ENCODE measurements at regions of chr7 and their contacts with region 1.

Region 1: DNA sequence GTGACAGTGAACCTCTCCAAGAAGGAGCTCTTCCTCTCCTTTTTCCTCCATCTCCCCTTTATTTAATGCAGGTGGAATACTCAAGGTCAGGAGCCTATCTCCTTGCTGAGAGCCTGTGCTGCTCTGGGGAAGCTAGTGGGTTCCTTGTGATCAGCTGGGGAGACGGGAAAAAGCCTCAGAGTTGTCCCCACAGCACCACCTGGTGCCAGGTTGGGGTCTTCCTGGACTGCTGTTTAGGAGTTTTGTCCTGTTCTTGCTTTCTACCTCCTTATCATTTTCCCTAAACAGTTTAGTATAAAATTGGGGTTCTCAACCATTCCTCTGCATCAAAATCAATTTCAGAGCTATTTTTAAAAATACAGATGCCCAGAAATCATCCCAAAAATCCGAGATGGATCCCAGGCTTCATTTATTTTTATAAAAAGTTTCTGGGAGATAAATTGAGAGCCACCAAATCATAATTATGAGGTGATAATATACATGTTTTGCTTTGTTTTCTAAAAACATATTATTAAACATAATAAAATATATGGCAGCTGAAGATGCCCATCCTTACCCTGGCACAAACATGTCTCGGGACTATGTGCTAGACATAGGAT is 44.3 kb downstream of the MACC1 start:
- DNase-seq: peak; percentile 66 to 80
- ATAC-seq: peak; percentile 74
- H3K4me3 ChIP-seq: no peak overlapping the region
- H3K27ac ChIP-seq: no peak overlapping the region
- H3K4me1 ChIP-seq: no peaks in the 10 kb centered on the region
- H3K27me3 ChIP-seq: no peaks in the 10 kb centered on the region

Region 2: DNA sequence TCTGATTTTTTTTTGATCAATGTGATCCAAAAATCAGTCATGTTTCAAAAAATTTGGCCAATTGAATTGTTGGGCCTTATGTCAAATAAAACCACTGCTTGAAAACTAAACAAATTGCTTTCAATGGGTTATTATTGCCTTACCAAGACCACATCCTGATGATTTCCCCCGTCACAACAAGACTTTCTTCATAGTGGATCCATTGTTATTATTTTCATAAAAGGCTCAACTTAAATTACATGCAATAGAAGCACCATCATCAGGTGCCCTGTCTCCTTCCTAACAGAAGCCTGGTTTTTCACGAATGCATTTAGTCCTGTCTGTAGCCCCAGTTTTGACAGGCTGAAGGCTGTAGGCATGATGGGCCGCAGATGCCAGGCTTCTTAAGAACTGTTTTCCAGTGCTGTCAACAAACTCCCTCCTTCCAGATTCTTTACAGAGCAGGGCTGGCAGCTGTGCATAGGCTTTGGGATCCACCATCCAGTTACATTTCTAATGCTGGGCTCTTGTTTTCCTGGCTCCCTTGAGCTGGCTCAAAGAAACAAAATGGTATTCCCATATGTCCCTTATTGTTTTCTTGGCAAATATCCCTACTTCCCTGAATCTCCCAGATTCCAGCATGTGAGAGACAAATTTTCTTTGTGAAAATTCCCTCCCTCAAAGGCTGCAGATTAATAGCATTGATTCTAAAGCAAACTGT is 1357.4 kb before region 1 on chr7:
- intact Hi-C with region 1: no loop called
- DNase-seq: no peak
- ATAC-seq: no peak
- H3K4me3 ChIP-seq: no peak overlapping the region
- H3K27ac ChIP-seq: no peak overlapping the region
- H3K4me1 ChIP-seq: no peaks in the 10 kb centered on the region
- H3K27me3 ChIP-seq: no peaks in the 10 kb centered on the region

Region 3: DNA sequence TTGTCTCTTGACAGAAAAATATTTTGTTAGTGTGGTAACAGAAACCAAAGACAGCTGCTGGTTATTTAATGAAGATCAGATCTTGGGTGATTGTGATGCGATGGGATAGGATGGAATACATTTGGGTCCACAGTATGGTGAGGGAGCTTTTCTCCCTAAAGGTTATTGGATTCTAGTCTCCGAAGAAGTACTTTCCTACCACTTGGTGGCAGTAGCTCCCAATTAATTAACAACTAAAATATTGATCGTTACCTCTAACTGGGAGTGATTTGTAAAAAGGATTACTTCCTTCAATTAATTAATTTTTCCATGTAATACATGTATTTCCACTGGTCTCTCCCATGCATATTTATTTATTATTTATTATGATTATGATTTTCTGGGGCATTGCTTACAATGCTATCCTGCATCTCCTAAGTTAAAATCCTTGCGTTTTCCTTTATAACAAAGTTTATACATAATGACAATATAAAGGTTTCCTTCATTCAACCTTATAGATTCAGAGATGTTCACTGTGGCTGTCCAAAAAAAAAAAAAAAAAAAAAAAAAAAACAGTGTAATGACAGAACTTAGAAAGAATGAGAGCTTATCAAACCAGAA is 425.0 kb before region 1 on chr7:
- intact Hi-C with region 1: loop called in 1 of 2 experiments (anchors 10 kb)
- DNase-seq: no peak
- ATAC-seq: no peak
- H3K4me3 ChIP-seq: no peak overlapping the region
- H3K27ac ChIP-seq: no peak overlapping the region
- H3K4me1 ChIP-seq: no peaks in the 10 kb centered on the region
- H3K27me3 ChIP-seq: no peaks in the 10 kb centered on the region